IMR-90 (cell line): ENCODE measurements at regions of chr1 and their contacts with region 1.

Region 1: GRCh38 chr1:63731117-63732043 is 42.4 kb upstream of the ROR1 start:
- DNase-seq: peak; percentile 96
- ATAC-seq: peak; percentile 84
- H3K4me3 ChIP-seq: no peak overlapping the region
- H3K27ac ChIP-seq: no peak overlapping the region
- H3K4me1 ChIP-seq: peaks cover 2% of the 10 kb centered on the region; the same call in 1 of the 2 replicates
- H3K27me3 ChIP-seq: no peaks in the 10 kb centered on the region; the same call in 1 of the 2 replicates
- CTCF ChIP-seq: no peak
- POLR2A ChIP-seq: peak; percentile 36; the same call in 1 of the 2 replicates
- RAD21 ChIP-seq: peak; percentile 8; the same call in 1 of the 2 replicates

Region 2: GRCh38 chr1:63746129-63746864 is 14.9 kb after region 1 on chr1:
- CTCF ChIA-PET with region 1: interaction called, 3 read pairs
- POLR2A ChIA-PET with region 1: no interaction called
- dilution Hi-C with region 1: no loop called
- in situ Hi-C with region 1: no loop called
- intact Hi-C with region 1: loop called (anchors 1 kb)
- DNase-seq: peak; percentile 95
- ATAC-seq: peak; percentile 93
- H3K4me3 ChIP-seq: no peak overlapping the region
- H3K27ac ChIP-seq: peak overlapping the region; percentile 38
- H3K4me1 ChIP-seq: peaks cover 6% of the 10 kb centered on the region; the same call in 1 of the 2 replicates
- H3K27me3 ChIP-seq: peaks cover 14% of the 10 kb centered on the region
- CTCF ChIP-seq: no peak
- POLR2A ChIP-seq: no peak
- RAD21 ChIP-seq: no peak